CD14-positive monocyte (primary cell): ENCODE measurements at regions of chr4 and their contacts with region 1.

Region 1: GRCh38 chr4:4254666-4255065 is 6.6 kb upstream of the TMEM128 start:
- DNase-seq: no peak
- H3K4me3 ChIP-seq: no peak overlapping the region
- H3K4me3 Mint-ChIP-seq: peak overlapping the region in 1 of 2 donors; percentile 11
- H3K27ac ChIP-seq: no peak overlapping the region
- H3K27ac Mint-ChIP-seq: no peak overlapping the region
- H3K4me1 ChIP-seq: no peaks in the 10 kb centered on the region
- H3K4me1 Mint-ChIP-seq: peaks cover 1% of the 10 kb centered on the region
- H3K27me3 ChIP-seq: peaks cover 0 to 2% of the 10 kb centered on the region in 2 donors
- H3K27me3 Mint-ChIP-seq: peaks cover 5 to 27% (median 23%) of the 10 kb centered on the region in 3 donors
- CTCF ChIP-seq: no peak

Region 2: DNA sequence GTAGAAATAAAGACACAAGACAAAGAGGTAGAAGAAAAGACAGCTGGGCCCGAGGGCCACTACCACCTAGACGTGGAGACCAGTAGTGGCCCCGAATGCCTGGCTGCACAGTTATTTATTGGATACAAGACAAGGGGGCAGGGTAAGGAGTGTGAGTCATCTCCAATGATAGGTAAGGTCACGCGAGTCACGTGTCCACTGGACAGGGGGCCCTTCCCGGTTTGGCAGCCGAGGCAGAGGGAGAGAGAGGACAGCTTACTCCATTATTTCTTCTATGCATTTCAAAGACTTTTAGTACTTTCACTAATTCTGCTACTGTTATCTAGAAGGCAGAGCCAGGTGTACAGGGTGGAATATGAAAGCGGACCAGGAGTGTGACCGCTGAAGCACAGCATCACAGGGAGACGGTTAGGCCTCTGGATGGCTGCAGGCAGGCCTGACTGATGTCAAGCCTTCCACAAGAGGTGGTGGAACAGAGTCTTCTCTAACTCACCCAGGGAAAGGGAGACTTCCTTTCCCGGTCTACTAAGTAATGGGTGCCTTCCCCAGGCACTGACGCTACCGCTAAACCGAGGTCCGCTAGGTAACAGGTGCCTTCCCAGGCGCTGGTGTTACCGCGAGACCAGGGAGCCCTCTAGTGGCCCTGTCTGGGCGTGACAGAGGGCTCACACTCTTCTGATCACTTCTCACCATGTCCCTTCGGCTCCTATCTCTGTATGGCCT is 80.3 kb after region 1 on chr4:
- intact Hi-C with region 1: loop called (anchors 2 to 5 kb)
- DNase-seq: peak; percentile 28 to 54 (median 48)
- H3K4me3 ChIP-seq: no peak overlapping the region
- H3K4me3 Mint-ChIP-seq: no peak overlapping the region
- H3K27ac ChIP-seq: no peak overlapping the region
- H3K27ac Mint-ChIP-seq: peak overlapping the region in 1 of 7 donors; percentile 3
- H3K4me1 ChIP-seq: no peaks in the 10 kb centered on the region
- H3K4me1 Mint-ChIP-seq: peaks cover 2% of the 10 kb centered on the region
- H3K27me3 ChIP-seq: no peaks in the 10 kb centered on the region
- H3K27me3 Mint-ChIP-seq: peaks cover 2 to 14% (median 5%) of the 10 kb centered on the region in 3 donors
- CTCF ChIP-seq: peak; percentile 87